ENCODE measurements at regions of chr11 and their contacts with region 1.

Region 1: GRCh38 chr11:105469931-105470330 is 139.9 kb upstream of the GRIA4 start:
- DNase-seq: no peak
- H3K4me3 ChIP-seq: no peak overlapping the region
- H3K27me3 ChIP-seq: no peaks in the 10 kb centered on the region
- CTCF ChIP-seq: no peak

Region 2: GRCh38 chr11:104984808-104985207 is 485.1 kb before region 1 on chr11:
- CTCF ChIA-PET with region 1: no interaction called
- POLR2A ChIA-PET with region 1: interaction called, 12 read pairs
- DNase-seq: no peak
- H3K4me3 ChIP-seq: no peak overlapping the region
- H3K27me3 ChIP-seq: no peaks in the 10 kb centered on the region
- CTCF ChIP-seq: no peak